PC-9 (cell line): ENCODE measurements at regions of chr3 and their contacts with region 1.

Region 1: DNA sequence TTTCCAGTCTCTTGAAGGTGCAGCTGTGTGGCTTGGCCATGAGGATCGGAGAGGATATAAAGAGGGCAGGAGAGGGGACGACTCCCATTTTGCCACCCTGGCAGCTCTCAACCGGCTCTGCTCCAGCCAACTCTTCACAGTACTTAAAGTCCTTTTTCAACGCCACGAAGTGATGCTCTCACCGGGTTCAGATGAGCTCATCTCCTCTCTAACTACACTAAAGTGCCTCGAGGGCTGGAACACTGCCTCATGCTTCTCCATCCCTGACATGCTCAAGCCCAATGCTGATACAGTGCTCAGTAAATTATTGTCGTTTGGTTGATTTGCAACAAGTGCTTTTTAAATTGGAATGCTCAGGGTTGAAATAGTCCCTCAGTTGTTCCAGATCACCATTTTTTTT is 97.8 kb downstream of the GTPBP8 start:
- DNase-seq: no peak
- H3K4me3 ChIP-seq: no peak overlapping the region
- H3K27ac ChIP-seq: no peak overlapping the region
- H3K4me1 ChIP-seq: no peaks in the 10 kb centered on the region
- H3K27me3 ChIP-seq: no peaks in the 10 kb centered on the region
- CTCF ChIP-seq: no peak

Region 2: GRCh38 chr3:113035387-113035982 is 53.1 kb before region 1 on chr3:
- CTCF ChIA-PET with region 1: interaction called, 14 read pairs
- POLR2A ChIA-PET with region 1: no interaction called
- intact Hi-C with region 1: no loop called
- DNase-seq: peak; percentile 33 to 53
- H3K4me3 ChIP-seq: no peak overlapping the region
- H3K27ac ChIP-seq: no peak overlapping the region
- H3K4me1 ChIP-seq: no peaks in the 10 kb centered on the region
- H3K27me3 ChIP-seq: no peaks in the 10 kb centered on the region
- CTCF ChIP-seq: peak; percentile 92

Region 3: DNA sequence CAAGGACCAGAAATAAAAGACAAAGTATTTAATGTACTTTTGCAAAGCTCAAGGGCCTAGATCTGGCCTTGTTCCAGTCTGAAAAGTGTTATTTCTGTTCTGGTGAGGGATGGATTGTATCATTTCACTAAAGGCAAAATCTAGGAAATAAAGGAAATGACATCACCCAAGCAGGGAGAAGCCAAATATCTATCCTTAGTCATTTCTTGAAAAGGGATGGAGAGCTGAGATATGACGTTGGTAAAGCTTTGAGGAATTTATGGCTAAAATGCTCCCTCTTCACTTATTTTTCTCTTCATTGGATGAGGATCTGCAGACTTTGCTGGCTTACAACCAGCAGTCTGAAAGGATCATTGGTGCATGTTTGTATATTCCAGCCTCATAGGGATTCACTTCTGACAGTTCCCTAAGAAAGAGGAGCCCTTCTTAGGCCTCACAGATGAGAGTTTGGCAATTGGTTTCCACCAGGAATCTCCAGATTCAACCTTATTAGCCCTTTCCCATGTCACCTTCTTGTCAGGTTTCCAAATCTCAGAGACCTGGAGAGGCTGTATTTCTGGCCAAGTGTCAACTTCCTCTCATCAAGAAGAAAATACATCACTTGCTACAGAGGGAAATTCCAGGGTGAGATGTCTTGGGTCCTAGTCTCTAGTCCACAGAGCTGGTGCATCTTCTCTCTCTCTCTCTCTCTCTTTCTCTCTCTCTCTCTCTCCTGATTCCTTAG is 29.1 kb after region 1 on chr3:
- CTCF ChIA-PET with region 1: no interaction called
- POLR2A ChIA-PET with region 1: no interaction called
- intact Hi-C with region 1: no loop called
- DNase-seq: no peak
- H3K4me3 ChIP-seq: no peak overlapping the region
- H3K27ac ChIP-seq: no peak overlapping the region
- H3K4me1 ChIP-seq: no peaks in the 10 kb centered on the region
- H3K27me3 ChIP-seq: no peaks in the 10 kb centered on the region
- CTCF ChIP-seq: no peak

Region 4: GRCh38 chr3:113263020-113263419 is 174.4 kb after region 1 on chr3:
- CTCF ChIA-PET with region 1: no interaction called
- POLR2A ChIA-PET with region 1: interaction called, 10 read pairs
- intact Hi-C with region 1: no loop called
- DNase-seq: no peak
- H3K4me3 ChIP-seq: no peak overlapping the region
- H3K27ac ChIP-seq: no peak overlapping the region
- H3K4me1 ChIP-seq: no peaks in the 10 kb centered on the region
- H3K27me3 ChIP-seq: no peaks in the 10 kb centered on the region; the same call in 1 of the 2 replicates
- CTCF ChIP-seq: no peak